Caco-2 (cell line): ENCODE measurements at regions of chr5 and their contacts with region 1.

Region 1: DNA sequence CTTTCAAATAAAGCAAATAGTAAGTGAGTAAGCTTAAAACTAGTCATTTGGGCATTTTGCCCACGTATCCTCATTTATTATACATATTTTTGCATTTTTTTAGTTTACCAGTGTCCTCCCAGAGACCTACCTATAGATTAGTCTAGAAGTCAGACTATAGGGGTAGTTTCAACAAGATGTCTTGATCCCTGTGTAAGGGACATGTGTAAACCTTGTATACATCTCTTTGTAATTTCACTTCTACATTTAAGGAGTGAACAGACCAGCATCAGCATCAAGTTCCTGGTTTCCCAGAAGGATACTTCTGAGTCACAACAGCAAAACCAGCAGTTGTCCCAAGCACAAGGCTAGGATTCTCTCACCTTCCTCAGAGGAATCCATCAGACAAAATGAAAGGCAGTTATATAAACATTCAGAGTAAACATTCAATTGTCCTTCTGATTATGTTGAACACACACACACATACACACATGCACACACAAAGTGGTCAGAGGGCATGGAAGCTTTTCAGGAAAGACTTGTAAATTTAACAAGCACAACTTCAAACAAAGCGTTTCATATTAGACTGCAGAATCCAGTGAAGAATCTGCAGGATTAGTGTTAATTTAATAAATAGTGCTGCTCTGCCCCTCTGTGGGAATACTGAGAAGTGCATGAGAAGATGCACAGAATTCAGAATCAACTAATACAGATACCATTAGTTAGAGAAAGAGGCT is 55.4 kb downstream of the HINT1 start:
- DNase-seq: peak in 1 of 2 experiments; percentile 45
- H3K4me3 ChIP-seq: no peak overlapping the region
- H3K4me3 Mint-ChIP-seq: no peak overlapping the region
- H3K27ac Mint-ChIP-seq: no peak overlapping the region
- H3K4me1 ChIP-seq: no peaks in the 10 kb centered on the region
- H3K4me1 Mint-ChIP-seq: no peaks in the 10 kb centered on the region
- H3K27me3 ChIP-seq: no peaks in the 10 kb centered on the region
- H3K27me3 Mint-ChIP-seq: peaks cover 2% of the 10 kb centered on the region
- CTCF ChIP-seq: peak; percentile 72 to 75

Region 2: GRCh38 chr5:129904102-129904666 is 1205.5 kb before region 1 on chr5 and contains the start of gene CHSY3:
- CTCF ChIA-PET with region 1: no interaction called
- POLR2A ChIA-PET with region 1: no interaction called
- intact Hi-C with region 1: loop called (anchors 5 kb)
- DNase-seq: peak; percentile 68 to 70
- H3K4me3 ChIP-seq: peak within 1 kb of the TSS; percentile 67
- H3K4me3 Mint-ChIP-seq: peak within 1 kb of the TSS; percentile 88
- H3K27ac Mint-ChIP-seq: peak within 1 kb of the TSS; percentile 39
- H3K4me1 ChIP-seq: peaks cover 15% of the 10 kb centered on the region
- H3K4me1 Mint-ChIP-seq: peaks cover 15% of the 10 kb centered on the region
- H3K27me3 ChIP-seq: no peaks in the 10 kb centered on the region; the same call in none of the 2 replicates
- H3K27me3 Mint-ChIP-seq: peaks cover 27% of the 10 kb centered on the region
- CTCF ChIP-seq: no peak
- total RNA-seq, gene CHSY3: 0.32 and 0.46 TPM in 2 replicates

Region 3: DNA sequence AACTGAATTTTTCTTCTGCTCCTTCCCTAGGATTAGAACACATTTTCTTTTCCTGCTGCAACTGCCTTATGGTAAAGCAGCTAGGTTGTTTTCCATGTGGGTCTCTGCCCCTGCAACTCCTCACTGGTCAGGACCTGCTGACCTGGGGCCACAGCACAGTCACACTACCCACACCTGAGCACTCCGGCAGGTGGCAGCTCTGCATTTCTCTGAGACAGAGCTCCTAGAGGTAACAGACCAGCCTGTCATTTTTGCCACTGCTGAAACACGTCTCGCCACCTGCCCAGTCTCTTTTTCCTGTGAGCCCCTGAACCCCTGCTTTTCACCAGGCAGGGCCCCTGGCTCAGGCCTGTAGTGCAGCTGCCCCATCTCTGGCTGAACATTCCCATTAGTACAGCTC is 554.3 kb before region 1 on chr5:
- CTCF ChIA-PET with region 1: no interaction called
- POLR2A ChIA-PET with region 1: no interaction called
- intact Hi-C with region 1: loop called (anchors 5 kb)
- DNase-seq: peak; percentile 5 to 35
- H3K4me3 ChIP-seq: no peak overlapping the region
- H3K4me3 Mint-ChIP-seq: no peak overlapping the region
- H3K27ac Mint-ChIP-seq: no peak overlapping the region
- H3K4me1 ChIP-seq: no peaks in the 10 kb centered on the region
- H3K4me1 Mint-ChIP-seq: no peaks in the 10 kb centered on the region
- H3K27me3 ChIP-seq: no peaks in the 10 kb centered on the region
- H3K27me3 Mint-ChIP-seq: no peaks in the 10 kb centered on the region
- CTCF ChIP-seq: peak in 1 of 2 experiments; percentile 24

Region 4: GRCh38 chr5:130871346-130872086 is 238.2 kb before region 1 on chr5:
- CTCF ChIA-PET with region 1: no interaction called
- POLR2A ChIA-PET with region 1: no interaction called
- intact Hi-C with region 1: loop called (anchors 1 kb)
- DNase-seq: peak in 1 of 2 experiments; percentile 58
- H3K4me3 ChIP-seq: no peak overlapping the region
- H3K4me3 Mint-ChIP-seq: no peak overlapping the region
- H3K27ac Mint-ChIP-seq: no peak overlapping the region
- H3K4me1 ChIP-seq: peaks cover 7% of the 10 kb centered on the region; the same call in 1 of the 2 replicates
- H3K4me1 Mint-ChIP-seq: peaks cover 15% of the 10 kb centered on the region
- H3K27me3 ChIP-seq: no peaks in the 10 kb centered on the region
- H3K27me3 Mint-ChIP-seq: no peaks in the 10 kb centered on the region
- CTCF ChIP-seq: peak; percentile 70 to 73

Region 5: DNA sequence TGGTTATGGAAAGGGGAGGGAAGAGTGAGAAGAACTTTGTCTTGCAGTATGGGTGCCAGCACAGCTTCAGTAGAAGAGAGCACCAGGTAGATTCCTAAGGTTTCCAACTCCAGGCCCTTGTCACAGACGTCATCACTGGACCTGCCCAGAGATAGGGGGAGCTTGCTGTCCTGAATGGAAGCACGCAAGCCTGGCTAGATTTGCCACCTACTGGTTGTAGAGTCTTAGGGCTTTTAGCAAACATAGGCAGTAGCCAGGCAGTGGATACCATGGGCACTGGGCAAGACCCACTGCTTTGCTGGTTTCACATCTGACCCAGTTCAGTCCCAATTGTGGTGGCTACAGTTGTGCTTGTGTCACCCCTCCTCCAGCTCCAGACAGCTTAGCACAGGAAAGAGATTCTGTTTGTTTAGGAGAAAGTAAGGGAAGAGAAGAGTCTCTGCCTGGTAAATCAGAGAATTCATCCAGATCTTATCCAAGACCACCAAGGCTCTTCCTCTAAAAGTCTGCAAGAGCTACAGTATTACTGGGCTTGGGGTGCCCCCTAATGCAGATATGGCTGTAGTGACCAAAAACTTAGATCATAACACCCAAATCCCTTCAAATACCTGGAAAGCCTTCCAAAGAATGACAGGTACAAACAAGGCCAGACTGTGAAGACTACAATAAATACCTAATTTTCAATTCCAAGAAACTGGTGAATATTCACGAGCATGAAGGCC is 103.6 kb before region 1 on chr5:
- CTCF ChIA-PET with region 1: no interaction called
- POLR2A ChIA-PET with region 1: no interaction called
- intact Hi-C with region 1: loop called (anchors 1 kb)
- DNase-seq: peak in 1 of 2 experiments; percentile 17
- H3K4me3 ChIP-seq: no peak overlapping the region
- H3K4me3 Mint-ChIP-seq: no peak overlapping the region
- H3K27ac Mint-ChIP-seq: no peak overlapping the region
- H3K4me1 ChIP-seq: no peaks in the 10 kb centered on the region
- H3K4me1 Mint-ChIP-seq: no peaks in the 10 kb centered on the region
- H3K27me3 ChIP-seq: no peaks in the 10 kb centered on the region
- H3K27me3 Mint-ChIP-seq: peaks cover 10% of the 10 kb centered on the region
- CTCF ChIP-seq: peak; percentile 27 to 32

Region 6: DNA sequence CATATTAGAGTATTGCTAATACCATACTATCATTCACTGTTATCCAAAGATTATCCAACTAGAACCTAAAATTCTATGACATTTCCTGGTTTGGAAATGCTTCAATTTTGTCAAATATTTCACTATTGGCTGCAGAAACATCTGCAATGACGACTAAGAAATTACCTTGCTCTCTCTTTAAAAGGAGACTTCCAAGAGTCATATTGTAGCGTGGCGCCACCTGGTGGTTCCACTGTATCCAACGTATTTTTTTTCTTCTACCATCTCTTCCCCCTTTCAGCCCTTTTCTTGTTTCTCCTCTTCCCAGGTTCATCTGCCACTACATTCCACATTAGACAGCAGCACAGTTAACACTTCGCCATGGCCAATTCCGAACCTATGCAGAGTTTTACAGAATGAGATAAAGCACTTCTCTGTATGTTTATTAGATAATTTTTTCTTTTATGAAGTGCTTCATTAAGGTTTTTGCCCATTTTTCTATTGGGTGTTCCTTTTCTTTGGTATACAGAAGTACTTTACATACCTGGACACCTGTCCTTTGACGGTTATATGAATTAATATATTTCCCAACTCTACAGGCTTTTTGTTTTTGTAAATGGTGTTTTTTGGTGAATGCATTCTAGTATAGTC is 307.7 kb after region 1 on chr5:
- CTCF ChIA-PET with region 1: no interaction called
- POLR2A ChIA-PET with region 1: no interaction called
- intact Hi-C with region 1: loop called (anchors 5 kb)
- DNase-seq: peak; percentile 72 to 75
- H3K4me3 ChIP-seq: no peak overlapping the region
- H3K4me3 Mint-ChIP-seq: no peak overlapping the region
- H3K27ac Mint-ChIP-seq: no peak overlapping the region
- H3K4me1 ChIP-seq: no peaks in the 10 kb centered on the region
- H3K4me1 Mint-ChIP-seq: no peaks in the 10 kb centered on the region
- H3K27me3 ChIP-seq: no peaks in the 10 kb centered on the region
- H3K27me3 Mint-ChIP-seq: no peaks in the 10 kb centered on the region
- CTCF ChIP-seq: peak; percentile 76

Region 7: GRCh38 chr5:131453826-131454225 is 344.1 kb after region 1 on chr5:
- CTCF ChIA-PET with region 1: no interaction called
- POLR2A ChIA-PET with region 1: no interaction called
- intact Hi-C with region 1: no loop called
- DNase-seq: no peak
- H3K4me3 ChIP-seq: no peak overlapping the region
- H3K4me3 Mint-ChIP-seq: no peak overlapping the region
- H3K27ac Mint-ChIP-seq: no peak overlapping the region
- H3K4me1 ChIP-seq: 0 out of 2 replicates have a peak, but pooled peaks cover 3% of the 10 kb centered on the region
- H3K4me1 Mint-ChIP-seq: peaks cover 11% of the 10 kb centered on the region
- H3K27me3 ChIP-seq: no peaks in the 10 kb centered on the region
- H3K27me3 Mint-ChIP-seq: no peaks in the 10 kb centered on the region
- CTCF ChIP-seq: no peak